Aorta (tissue), 5 donors: ENCODE measurements at regions of chr4 and their contacts with region 1.

Region 1: DNA sequence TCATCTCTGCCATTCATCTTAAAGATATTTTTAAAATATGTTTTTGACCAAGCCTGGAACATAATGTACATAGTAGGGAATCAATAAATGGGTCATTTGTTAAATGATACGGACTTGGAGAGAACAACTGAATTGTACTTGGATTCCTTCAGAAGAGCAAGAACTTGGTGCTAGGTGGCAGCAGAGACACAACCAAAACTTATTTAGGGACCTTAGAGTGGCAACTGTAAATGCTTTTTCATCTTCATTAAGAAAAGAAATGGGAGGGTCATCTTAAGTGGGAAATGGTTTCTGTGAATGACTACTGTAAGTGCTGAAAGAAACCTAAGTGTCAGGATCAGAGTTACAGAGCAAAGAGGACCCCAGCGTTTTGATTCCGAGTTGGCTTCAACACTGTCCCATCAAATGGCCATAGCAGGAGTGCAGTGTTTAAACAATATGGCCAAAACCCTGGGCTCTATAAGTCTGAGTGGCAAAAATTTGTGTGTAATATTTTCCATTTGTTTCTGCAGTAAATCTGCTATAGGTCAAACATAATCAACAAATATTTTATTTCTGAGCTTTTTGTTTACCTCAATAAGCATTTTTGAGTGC is 213.6 kb downstream of the PALLD start:
- DNase-seq: peak in 1 of 2 donors; percentile 60
- ATAC-seq: peak; percentile 68
- H3K4me3 ChIP-seq: no peak overlapping the region
- H3K27ac ChIP-seq: peak overlapping the region; percentile 64 to 96
- H3K4me1 ChIP-seq: peaks cover 4 to 5% of the 10 kb centered on the region in 2 donors
- H3K27me3 ChIP-seq: no peaks in the 10 kb centered on the region

Region 2: DNA sequence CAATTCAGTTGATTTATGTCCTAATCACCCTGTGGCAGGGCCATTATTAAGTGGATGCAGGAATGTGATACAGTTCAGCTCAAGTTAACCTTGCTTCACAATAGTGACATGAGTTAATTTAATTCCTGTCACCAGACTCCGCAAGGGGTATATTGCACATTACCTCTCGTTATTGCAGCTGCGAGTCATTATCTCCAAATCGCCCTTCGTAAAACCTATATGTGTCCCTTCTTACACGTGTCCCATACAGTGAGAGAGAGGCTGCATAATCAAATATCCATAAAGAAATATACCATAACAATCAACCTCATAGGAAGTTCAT is 988.0 kb before region 1 on chr4:
- intact Hi-C with region 1: no loop called
- DNase-seq: no peak
- ATAC-seq: no peak
- H3K4me3 ChIP-seq: no peak overlapping the region
- H3K27ac ChIP-seq: no peak overlapping the region
- H3K4me1 ChIP-seq: no peaks in the 10 kb centered on the region
- H3K27me3 ChIP-seq: no peaks in the 10 kb centered on the region

Region 3: DNA sequence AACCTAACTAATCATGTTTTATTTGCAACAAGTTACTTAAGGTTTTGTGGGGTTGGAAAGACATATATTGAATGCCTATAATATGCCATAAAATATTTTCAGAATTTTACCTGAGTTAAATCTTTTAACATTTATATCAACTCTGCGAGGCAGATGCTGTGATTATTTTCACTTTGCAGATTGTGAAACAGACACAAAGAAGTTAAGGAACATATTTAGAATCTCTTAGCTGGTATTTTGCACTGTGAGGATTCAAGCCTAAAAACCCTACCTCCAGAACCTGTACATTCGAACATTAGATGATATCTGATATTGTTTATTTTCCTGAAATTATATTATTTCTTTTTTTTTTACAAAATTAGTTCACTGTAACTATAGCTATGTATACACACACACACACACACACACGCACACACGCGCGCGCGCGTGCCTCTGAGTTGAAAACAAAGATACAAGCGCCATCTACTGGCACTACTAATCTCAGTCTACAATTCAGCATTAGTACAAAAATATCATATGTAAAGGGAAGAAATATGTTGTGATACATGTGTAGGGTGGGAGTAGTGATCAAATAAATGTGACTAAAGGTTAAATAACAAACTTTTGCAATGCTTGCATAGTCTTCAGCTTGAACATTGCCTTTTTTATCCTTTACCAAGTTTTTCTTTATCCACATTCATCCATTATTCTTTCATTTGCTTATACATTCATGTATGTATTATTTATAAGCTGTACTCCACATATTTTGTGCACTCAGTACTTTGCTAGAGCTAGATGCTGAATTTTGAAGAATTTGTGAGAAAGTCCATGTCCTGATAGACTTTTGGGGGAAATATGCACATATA is 556.6 kb before region 1 on chr4:
- intact Hi-C with region 1: no loop called
- DNase-seq: peak; percentile 75 to 81
- ATAC-seq: peak; percentile 78
- H3K4me3 ChIP-seq: peak overlapping the region in 1 of 2 donors; percentile 8
- H3K27ac ChIP-seq: no peak overlapping the region
- H3K4me1 ChIP-seq: no peaks in the 10 kb centered on the region
- H3K27me3 ChIP-seq: no peaks in the 10 kb centered on the region

Region 4: DNA sequence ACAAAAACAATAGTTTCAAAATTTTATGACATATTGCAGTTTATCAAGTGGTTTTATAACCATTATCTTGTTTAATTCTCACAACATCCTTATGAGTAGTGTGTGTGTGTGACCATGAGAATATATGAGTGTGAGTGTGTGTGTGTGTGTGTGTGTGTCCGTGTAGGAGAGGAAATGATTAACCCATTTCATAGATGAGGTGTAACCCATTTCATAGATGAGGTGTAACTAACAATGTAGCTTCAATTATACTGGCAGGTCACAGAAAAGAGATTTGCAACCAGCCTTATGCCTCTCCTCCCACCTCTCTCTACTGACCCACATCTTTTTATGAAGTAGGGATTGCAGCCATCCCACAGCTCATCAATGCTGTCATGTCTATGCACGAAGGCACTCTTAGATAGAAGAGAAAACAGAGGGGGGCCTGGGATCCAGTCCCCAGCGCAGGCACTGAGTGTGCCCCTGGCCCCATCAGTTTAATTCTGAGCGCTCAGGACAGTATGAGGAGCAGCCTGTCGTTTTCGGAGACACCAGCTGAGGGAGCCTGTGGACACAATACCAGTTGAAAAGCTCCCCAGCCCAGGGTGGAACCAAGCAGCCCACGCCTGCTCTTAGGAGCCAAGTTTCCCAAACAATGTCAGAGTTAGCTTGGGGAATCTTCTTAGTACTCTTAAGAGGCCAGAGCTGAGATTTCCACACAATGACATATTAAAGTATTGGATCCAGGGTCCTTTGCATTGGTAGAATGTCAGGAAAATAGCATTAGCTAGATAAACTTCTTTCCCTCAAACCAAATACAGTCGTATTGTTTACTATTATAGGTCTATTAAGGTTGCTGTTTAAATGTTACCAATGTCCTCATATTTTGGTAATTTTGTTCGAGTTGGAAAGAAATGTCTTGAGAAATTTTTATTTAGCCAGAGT is 125.0 kb before region 1 on chr4:
- intact Hi-C with region 1: loop called (anchors 2 to 5 kb)
- DNase-seq: peak; percentile 84 to 92
- ATAC-seq: peak; percentile 90
- H3K4me3 ChIP-seq: no peak overlapping the region
- H3K27ac ChIP-seq: no peak overlapping the region
- H3K4me1 ChIP-seq: peaks cover 2 to 6% of the 10 kb centered on the region in 2 donors
- H3K27me3 ChIP-seq: no peaks in the 10 kb centered on the region

Region 5: DNA sequence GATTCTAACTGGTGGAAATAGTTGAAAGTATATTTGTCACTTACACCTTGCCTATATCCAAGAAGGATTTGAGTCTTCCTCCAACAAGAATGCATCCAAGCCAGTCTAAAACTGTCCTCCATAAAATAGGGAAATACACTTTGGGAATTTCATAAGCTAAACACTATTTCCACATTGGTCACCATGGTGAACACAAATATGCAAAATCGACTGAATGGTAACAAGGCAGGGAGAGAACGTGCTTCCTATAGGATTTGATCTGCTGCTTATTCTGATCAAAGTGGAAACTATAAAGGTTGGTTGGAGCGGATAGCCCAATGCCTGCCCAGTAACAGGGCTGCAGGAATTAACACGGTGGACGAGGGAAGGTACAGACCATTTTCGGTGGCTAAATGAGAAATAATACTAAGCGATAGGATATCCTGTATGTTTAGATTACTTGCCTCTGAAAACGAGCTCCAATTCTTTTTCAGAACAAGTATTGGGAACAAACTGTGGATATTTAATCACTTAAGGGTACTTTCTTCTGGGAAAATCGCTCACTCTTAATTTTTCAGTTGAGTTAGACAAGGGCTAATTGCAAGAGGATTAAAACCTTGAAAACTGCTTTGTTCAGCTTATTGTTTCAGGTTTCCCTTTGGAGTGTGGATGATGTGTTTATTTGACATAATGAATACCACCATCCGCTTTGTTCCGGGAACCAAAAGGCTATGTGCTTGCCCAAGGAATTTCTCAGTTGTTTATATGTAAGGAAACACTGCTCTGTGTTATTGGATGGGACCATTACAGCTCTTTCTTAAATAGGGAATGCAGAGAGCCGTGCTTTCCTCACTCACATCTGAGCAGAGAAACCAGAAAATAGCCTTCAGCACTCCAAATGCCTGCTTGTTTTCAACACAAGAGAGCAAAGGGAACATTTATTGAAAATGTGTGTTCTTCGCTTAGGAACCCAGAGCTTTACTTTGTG is 105.2 kb after region 1 on chr4:
- intact Hi-C with region 1: loop called (anchors 5 kb)
- DNase-seq: no peak
- ATAC-seq: peak; percentile 48
- H3K4me3 ChIP-seq: no peak overlapping the region
- H3K27ac ChIP-seq: peak overlapping the region; percentile 76 to 88
- H3K4me1 ChIP-seq: peaks cover 0 to 3% of the 10 kb centered on the region in 2 donors
- H3K27me3 ChIP-seq: no peaks in the 10 kb centered on the region

Region 6: GRCh38 chr4:168877511-168878491 is 167.4 kb after region 1 on chr4:
- intact Hi-C with region 1: loop called in 1 of 2 experiments (anchors 10 kb)
- DNase-seq: peak; percentile 74 to 88
- ATAC-seq: peak; percentile 77
- H3K4me3 ChIP-seq: peak overlapping the region in 1 of 2 donors; percentile 11
- H3K27ac ChIP-seq: peak overlapping the region; percentile 79 to 91
- H3K4me1 ChIP-seq: peaks cover 7 to 12% of the 10 kb centered on the region in 2 donors
- H3K27me3 ChIP-seq: no peaks in the 10 kb centered on the region

Region 7: GRCh38 chr4:168923526-168924194 is 213.2 kb after region 1 on chr4:
- intact Hi-C with region 1: loop called (anchors 2 to 5 kb)
- DNase-seq: peak in 1 of 2 donors; percentile 45
- ATAC-seq: peak; percentile 70
- H3K4me3 ChIP-seq: no peak overlapping the region
- H3K27ac ChIP-seq: no peak overlapping the region
- H3K4me1 ChIP-seq: no peaks in the 10 kb centered on the region
- H3K27me3 ChIP-seq: no peaks in the 10 kb centered on the region

Region 8: DNA sequence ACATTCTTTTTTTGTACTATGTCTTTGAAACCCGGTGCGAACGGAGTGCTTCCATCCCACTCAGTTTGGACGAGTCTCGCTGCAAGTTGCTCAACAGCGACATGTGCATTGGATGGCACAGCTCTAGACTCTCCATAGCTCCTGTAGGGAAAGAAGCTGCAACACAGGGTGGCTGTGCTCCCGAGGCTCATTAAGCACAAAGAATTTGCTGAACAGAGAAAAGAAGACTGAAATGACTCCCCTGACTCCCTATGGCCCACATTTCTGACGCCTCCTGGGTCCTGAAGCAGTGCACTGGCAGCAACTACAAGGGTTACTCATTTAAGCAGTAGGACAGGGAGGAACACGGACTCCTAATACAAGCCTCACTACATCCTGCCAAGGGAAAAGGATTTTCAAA is 432.9 kb after region 1 on chr4:
- intact Hi-C with region 1: no loop called
- DNase-seq: no peak
- ATAC-seq: no peak
- H3K4me3 ChIP-seq: no peak overlapping the region
- H3K27ac ChIP-seq: no peak overlapping the region
- H3K4me1 ChIP-seq: no peaks in the 10 kb centered on the region
- H3K27me3 ChIP-seq: no peaks in the 10 kb centered on the region

Region 9: DNA sequence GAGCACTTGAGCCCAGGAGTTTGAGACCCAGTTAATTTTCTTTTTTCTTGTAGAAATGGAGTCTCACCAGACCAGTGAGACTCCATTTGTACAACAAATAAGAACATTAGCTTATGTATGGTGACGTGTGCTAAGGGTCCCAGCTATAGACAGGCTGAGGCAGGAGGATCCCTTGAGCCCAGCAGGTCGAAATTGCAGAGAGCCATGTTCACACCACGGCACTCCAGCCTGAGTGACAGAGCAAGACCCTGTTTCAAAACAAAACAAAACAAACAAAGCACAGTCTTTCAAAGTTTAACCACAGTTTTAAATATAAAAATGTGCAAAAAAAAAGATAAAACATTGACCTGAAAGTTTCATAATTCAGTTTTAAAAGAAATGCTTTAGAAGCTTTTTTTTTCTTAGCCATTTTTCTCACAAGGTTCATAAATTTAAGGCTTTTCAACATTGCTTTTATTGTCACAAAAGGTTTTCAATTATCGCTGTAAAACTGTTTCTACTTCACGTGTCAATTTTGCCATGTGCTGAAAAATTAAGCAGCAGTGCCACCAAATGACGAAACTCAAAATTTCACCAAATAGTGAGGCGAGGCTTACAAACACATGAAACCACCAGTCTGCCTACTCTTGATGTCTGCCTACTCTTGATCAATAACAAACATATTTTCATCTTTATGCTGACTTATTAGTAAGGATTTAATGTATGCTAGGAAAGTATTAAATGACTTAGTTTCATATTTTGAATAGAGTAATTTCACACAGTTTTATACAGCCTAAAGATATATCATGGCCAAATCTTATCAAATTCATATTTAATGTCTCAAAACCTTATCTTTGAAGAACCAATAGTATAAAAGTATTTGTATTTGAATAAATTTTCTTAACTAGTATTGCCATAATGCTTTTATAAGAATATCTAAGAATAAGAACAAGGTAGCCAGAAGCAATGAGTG is 775.6 kb after region 1 on chr4:
- intact Hi-C with region 1: loop called in 1 of 2 experiments (anchors 10 kb)
- DNase-seq: no peak
- ATAC-seq: peak; percentile 74
- H3K4me3 ChIP-seq: no peak overlapping the region
- H3K27ac ChIP-seq: no peak overlapping the region
- H3K4me1 ChIP-seq: no peaks in the 10 kb centered on the region
- H3K27me3 ChIP-seq: no peaks in the 10 kb centered on the region